ENCODE measurements at regions of chr14 and their contacts with region 1.

Region 1: GRCh38 chr14:102215071-102215470 is 75.4 kb downstream of the WDR20 start:
- DNase-seq: no peak
- ATAC-seq: peak in 7 of 8 donors; percentile 56 to 82 (median 72)
- H3K4me3 ChIP-seq: peak overlapping the region in 2 of 10 donors; percentile 9 to 10
- H3K27ac ChIP-seq: peak overlapping the region in 9 of 10 donors; percentile 41 to 80 (median 60)
- H3K4me1 ChIP-seq: peaks cover 0 to 46% (median 28%) of the 10 kb centered on the region in 9 donors
- H3K27me3 ChIP-seq: no peaks in the 10 kb centered on the region
- CTCF ChIP-seq: no peak

Region 2: GRCh38 chr14:102055216-102055918 is 159.7 kb before region 1 on chr14:
- intact Hi-C with region 1: loop called in 1 of 10 experiments (anchors 10 kb)
- DNase-seq: no peak
- ATAC-seq: no peak
- H3K4me3 ChIP-seq: no peak overlapping the region
- H3K27ac ChIP-seq: no peak overlapping the region
- H3K4me1 ChIP-seq: peaks cover 0 to 4% (median 0%) of the 10 kb centered on the region in 9 donors
- H3K27me3 ChIP-seq: no peaks in the 10 kb centered on the region
- CTCF ChIP-seq: no peak

Region 3: GRCh38 chr14:102235275-102235897 is 20.3 kb after region 1 on chr14:
- intact Hi-C with region 1: loop called in 1 of 10 experiments (anchors 1 kb)
- DNase-seq: peak; percentile 83 to 86
- ATAC-seq: peak; percentile 89 to 97 (median 95)
- H3K4me3 ChIP-seq: peak overlapping the region in 9 of 10 donors; percentile 6 to 57 (median 47)
- H3K27ac ChIP-seq: peak overlapping the region in 7 of 10 donors; percentile 23 to 70 (median 58)
- H3K4me1 ChIP-seq: peaks cover 0 to 18% (median 7%) of the 10 kb centered on the region in 9 donors
- H3K27me3 ChIP-seq: no peaks in the 10 kb centered on the region
- CTCF ChIP-seq: peak; percentile 69 to 93 (median 88)

Region 4: DNA sequence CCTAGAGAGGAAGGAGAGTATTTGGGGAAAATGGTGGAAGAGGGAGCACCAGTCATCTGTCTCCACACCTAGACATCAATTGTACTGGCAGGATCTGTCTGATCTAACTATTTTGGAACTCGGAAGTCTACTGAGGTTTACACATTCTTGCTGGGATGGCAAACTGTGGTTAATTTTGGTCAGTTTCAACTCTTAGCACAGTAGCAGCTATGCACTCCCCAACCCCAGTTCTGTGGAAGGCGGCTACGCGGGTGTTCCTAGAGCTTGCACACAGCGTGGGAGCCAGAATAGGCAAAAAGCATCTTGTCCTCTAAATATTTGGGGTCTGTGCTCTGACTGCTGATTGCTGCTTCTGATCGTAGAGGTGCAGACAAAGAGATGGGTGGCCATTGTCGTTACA is 181.4 kb after region 1 on chr14:
- intact Hi-C with region 1: no loop called
- DNase-seq: no peak
- ATAC-seq: no peak
- H3K4me3 ChIP-seq: no peak overlapping the region
- H3K27ac ChIP-seq: no peak overlapping the region
- H3K4me1 ChIP-seq: peaks cover 0 to 11% (median 4%) of the 10 kb centered on the region in 9 donors
- H3K27me3 ChIP-seq: no peaks in the 10 kb centered on the region
- CTCF ChIP-seq: no peak

Measured in heart right ventricle (tissue), 16 donors.